ENCODE measurements at regions of chr17 and their contacts with region 1.

Region 1: DNA sequence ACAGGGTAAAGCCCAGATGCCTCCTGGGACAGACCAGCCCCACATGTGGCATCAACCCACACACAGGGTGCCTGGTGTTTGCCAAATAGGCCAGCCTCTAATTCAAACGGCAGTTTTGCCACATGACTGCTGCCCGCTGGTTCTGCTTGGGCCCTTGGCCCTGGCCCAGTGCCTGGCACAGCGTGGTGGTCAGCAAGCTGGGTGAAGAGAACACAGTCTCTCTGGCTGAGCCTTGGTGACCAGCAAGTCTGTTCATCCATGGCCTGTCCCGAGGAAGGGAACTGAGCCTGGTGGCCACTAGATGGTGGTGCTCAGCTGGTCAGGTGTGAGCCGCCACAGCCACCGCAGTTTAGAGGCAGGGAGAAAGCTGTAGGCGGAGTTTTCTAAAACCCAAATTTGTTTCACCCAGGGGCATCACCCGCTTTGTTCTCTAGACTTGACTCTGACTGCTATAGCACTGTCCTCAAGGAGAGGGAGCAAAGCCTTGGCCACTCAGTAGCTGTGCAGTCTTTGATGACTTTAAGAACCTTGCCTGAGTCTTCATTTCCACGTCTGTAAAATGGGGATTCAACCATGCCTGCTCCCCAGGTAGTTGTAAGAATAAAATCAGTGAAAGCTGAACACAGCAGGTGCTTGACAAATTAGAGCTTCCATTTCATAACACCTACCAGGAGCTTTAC is 4.7 kb upstream of the GFAP start:
- DNase-seq: peak; percentile 93
- ATAC-seq: peak; percentile 90
- H3K4me3 ChIP-seq: no peak overlapping the region
- H3K27ac ChIP-seq: no peak overlapping the region
- H3K4me1 ChIP-seq: peaks cover 24% of the 10 kb centered on the region
- H3K27me3 ChIP-seq: no peaks in the 10 kb centered on the region
- CTCF ChIP-seq: peak; percentile 98

Region 2: GRCh38 chr17:44745301-44745700 is 174.7 kb before region 1 on chr17:
- CTCF ChIA-PET with region 1: no interaction called
- POLR2A ChIA-PET with region 1: interaction called, 18 read pairs
- intact Hi-C with region 1: no loop called
- DNase-seq: no peak
- ATAC-seq: no peak
- H3K4me3 ChIP-seq: no peak overlapping the region
- H3K27ac ChIP-seq: no peak overlapping the region
- H3K4me1 ChIP-seq: no peaks in the 10 kb centered on the region
- H3K27me3 ChIP-seq: no peaks in the 10 kb centered on the region
- CTCF ChIP-seq: peak; percentile 29; the same call in 1 of the 2 replicates

Region 3: DNA sequence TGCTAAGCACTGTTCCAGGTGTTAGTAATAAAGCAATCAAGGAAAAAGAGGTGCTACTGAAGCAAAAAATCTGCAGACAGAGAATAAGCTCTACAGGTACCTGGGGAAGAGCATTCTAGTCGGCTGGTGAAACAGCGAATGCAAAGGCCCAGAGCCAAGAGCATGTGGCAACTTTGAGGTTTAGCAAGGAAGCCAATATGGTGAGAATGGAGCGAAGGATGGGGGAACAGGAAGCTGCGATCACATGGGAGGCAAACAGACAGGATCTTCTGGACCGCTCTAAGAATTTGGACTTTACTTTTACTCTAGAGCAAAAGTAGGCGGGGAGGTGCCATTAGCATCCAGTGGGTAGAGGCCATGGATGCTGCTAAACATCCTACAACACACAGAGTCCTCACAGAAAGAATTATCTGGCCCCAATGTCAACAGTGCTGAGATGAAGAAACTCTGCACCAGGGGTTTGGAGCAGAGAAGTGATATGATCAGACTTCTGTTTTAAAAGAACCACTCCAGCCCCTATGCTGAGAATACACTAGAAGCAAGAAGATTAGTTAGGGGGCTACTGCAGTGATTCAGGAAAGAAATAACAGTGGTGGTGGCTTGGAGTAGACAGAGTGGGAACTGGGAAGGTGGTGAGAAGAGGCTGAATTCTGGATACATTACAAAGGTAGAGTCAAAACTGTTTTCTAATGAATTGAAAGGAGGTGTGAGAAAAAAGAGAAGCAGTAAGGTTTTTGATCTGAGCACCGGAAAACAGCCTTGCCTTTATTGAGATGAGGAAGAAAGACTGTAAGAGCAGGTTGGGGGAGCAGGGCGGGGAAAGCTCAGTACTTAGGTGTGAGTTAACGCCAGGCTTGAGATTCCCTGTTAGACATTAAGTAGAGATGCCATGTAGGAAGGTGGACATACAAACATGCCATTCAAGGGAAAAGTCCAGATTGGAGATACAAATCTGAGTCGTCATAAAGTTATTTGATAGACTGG is 31.8 kb before region 1 on chr17:
- CTCF ChIA-PET with region 1: no interaction called
- POLR2A ChIA-PET with region 1: no interaction called
- intact Hi-C with region 1: no loop called
- DNase-seq: no peak
- ATAC-seq: no peak
- H3K4me3 ChIP-seq: no peak overlapping the region
- H3K27ac ChIP-seq: no peak overlapping the region
- H3K4me1 ChIP-seq: no peaks in the 10 kb centered on the region
- H3K27me3 ChIP-seq: no peaks in the 10 kb centered on the region
- CTCF ChIP-seq: no peak

Region 4: GRCh38 chr17:44977814-44978550 is 58.0 kb after region 1 on chr17:
- CTCF ChIA-PET with region 1: interaction called, 8 read pairs
- POLR2A ChIA-PET with region 1: no interaction called
- intact Hi-C with region 1: loop called (anchors 1 kb)
- DNase-seq: no peak
- ATAC-seq: no peak
- H3K4me3 ChIP-seq: no peak overlapping the region
- H3K27ac ChIP-seq: no peak overlapping the region
- H3K4me1 ChIP-seq: peaks cover 25% of the 10 kb centered on the region
- H3K27me3 ChIP-seq: no peaks in the 10 kb centered on the region
- CTCF ChIP-seq: no peak